GM12878 (cell line): ENCODE measurements at regions of chr7 and their contacts with region 1.

Region 1: GRCh38 chr7:81925530-81925929 is 155.7 kb upstream of the HGF start:
- DNase-seq: peak; percentile 46
- ATAC-seq: peak; percentile 86
- H3K4me3 ChIP-seq: no peak overlapping the region
- H3K27ac ChIP-seq: no peak overlapping the region
- H3K4me1 ChIP-seq: peaks cover 14% of the 10 kb centered on the region
- H3K27me3 ChIP-seq: no peaks in the 10 kb centered on the region
- CTCF ChIP-seq: no peak
- EP300 ChIP-seq: peak; percentile 71 to 94
- POLR2A ChIP-seq: no peak
- RAD21 ChIP-seq: no peak

Region 2: GRCh38 chr7:81887098-81888090 is 38.1 kb before region 1 on chr7:
- CTCF ChIA-PET with region 1: no interaction called
- POLR2A ChIA-PET with region 1: no interaction called
- RAD21 ChIA-PET with region 1: interaction called, 3 read pairs
- SMC1A ChIA-PET with region 1: interaction called, 7 read pairs
- in situ Hi-C with region 1: no loop called
- intact Hi-C with region 1: loop called (anchors 2 kb)
- DNase-seq: peak; percentile 37
- ATAC-seq: peak; percentile 53
- H3K4me3 ChIP-seq: peak overlapping the region; percentile 33; the same call in 1 of the 2 replicates
- H3K27ac ChIP-seq: no peak overlapping the region
- H3K4me1 ChIP-seq: peaks cover 18% of the 10 kb centered on the region
- H3K27me3 ChIP-seq: no peaks in the 10 kb centered on the region
- CTCF ChIP-seq: no peak
- EP300 ChIP-seq: peak in 1 of 2 experiments; percentile 34; a peak in 2 of 4 replicates
- POLR2A ChIP-seq: no peak
- RAD21 ChIP-seq: no peak